ENCODE measurements at regions of chr18 and their contacts with region 1.

Region 1: GRCh38 chr18:59769129-59769865 is 72.1 kb upstream of the CCBE1 start:
- DNase-seq: peak; percentile 57
- H3K4me3 Mint-ChIP-seq: peak overlapping the region; percentile 29
- H3K27ac Mint-ChIP-seq: peak overlapping the region; percentile 89
- H3K4me1 Mint-ChIP-seq: peaks cover 21% of the 10 kb centered on the region
- H3K27me3 Mint-ChIP-seq: no peaks in the 10 kb centered on the region
- CTCF ChIP-seq: no peak

Region 2: GRCh38 chr18:59783138-59783537 is 13.8 kb after region 1 on chr18:
- CTCF ChIA-PET with region 1: interaction called, 14 read pairs
- POLR2A ChIA-PET with region 1: interaction called, 22 read pairs
- intact Hi-C with region 1: no loop called
- DNase-seq: peak; percentile 70
- H3K4me3 Mint-ChIP-seq: no peak overlapping the region
- H3K27ac Mint-ChIP-seq: peak overlapping the region; percentile 0
- H3K4me1 Mint-ChIP-seq: peaks cover 40% of the 10 kb centered on the region
- H3K27me3 Mint-ChIP-seq: no peaks in the 10 kb centered on the region
- CTCF ChIP-seq: peak; percentile 51

Measured in MCF 10A (cell line).